BJ (cell line): ENCODE measurements at regions of chr13 and their contacts with region 1.

Region 1: DNA sequence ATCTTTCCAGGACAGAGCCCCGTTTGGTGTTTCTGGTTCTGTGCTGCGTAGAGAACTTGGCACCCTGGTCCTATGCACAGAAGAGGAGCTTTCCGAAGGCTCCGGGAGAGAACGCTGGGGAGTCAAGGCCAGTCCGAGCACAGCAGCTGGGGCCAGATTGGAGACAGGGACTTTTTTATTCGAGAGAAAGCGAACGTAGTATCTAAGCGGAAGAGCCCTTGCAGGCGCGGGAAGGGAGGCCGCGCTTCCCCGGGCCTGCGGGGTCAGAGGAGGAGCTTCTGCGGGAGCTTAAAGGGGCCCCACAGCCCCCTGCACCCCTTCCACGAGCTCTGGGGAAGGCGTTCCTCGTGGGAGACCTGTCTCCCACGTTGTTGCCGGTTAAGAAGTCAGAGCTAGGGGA is 48.6 kb upstream of the ARHGEF7 start:
- DNase-seq: no peak
- H3K4me3 ChIP-seq: no peak overlapping the region
- H3K27me3 ChIP-seq: peaks cover 5% of the 10 kb centered on the region
- CTCF ChIP-seq: no peak

Region 2: DNA sequence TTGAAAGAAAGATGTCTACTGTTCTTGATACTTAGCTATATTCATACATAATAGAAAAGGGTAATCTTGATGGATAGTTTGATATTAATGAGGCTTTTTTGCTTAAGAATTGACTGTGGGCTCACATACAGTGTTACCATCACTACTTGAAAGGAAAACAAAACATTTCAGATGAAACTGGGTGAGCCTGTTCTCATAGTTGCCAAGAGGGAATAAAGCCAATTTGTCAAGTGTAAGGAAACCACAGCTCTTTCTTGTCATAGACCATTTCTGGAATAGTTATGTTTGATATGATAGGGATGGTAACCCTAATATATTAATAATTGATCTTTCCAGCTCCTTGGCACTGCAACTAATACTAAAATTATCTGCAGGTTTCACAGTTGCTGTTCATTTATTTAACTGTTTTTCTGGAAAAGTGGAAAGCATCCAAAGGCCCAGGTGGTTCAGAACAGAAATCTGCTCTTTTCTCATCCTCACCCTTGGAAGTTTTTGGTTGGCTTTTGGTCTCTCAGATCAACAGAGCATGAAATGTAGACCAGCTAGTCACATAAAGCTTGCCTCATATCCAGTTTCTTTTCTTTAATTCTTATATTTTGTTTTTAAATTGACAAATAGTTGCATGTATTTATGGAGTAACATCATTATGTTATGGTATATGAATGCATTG is 91.7 kb after region 1 on chr13:
- CTCF ChIA-PET with region 1: interaction called, 11 read pairs
- POLR2A ChIA-PET with region 1: no interaction called
- DNase-seq: no peak
- H3K4me3 ChIP-seq: no peak overlapping the region
- H3K27me3 ChIP-seq: no peaks in the 10 kb centered on the region
- CTCF ChIP-seq: no peak

Region 3: GRCh38 chr13:111216166-111216960 is 149.8 kb after region 1 on chr13:
- CTCF ChIA-PET with region 1: interaction called, 33 read pairs
- POLR2A ChIA-PET with region 1: no interaction called
- DNase-seq: no peak
- H3K4me3 ChIP-seq: no peak overlapping the region
- H3K27me3 ChIP-seq: no peaks in the 10 kb centered on the region
- CTCF ChIP-seq: peak; percentile 51

Region 4: GRCh38 chr13:111286162-111286561 is 219.6 kb after region 1 on chr13:
- CTCF ChIA-PET with region 1: interaction called, 13 read pairs
- POLR2A ChIA-PET with region 1: no interaction called
- DNase-seq: no peak
- H3K4me3 ChIP-seq: no peak overlapping the region
- H3K27me3 ChIP-seq: no peaks in the 10 kb centered on the region
- CTCF ChIP-seq: no peak

Region 5: DNA sequence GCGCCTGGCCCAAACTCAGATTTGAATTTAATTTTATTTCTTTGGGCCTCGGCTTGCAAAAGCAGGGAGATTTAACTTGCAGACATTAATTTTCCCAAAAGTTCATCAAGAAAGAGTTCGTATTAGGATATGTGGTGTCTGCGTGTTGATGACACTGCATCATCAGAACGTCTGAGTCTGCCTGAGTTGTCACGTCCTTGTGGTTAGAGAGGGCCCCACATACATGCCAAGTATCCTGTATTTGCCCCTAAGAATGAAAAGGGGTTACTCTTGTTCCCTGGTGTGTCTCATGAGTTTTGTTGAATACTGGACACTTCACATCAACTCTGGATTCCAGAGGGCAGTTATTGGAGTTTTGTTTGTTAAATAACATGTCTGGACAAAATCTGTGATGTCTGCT is 248.3 kb after region 1 on chr13:
- CTCF ChIA-PET with region 1: no interaction called
- POLR2A ChIA-PET with region 1: no interaction called
- DNase-seq: peak; percentile 35
- H3K4me3 ChIP-seq: no peak overlapping the region
- H3K27me3 ChIP-seq: no peaks in the 10 kb centered on the region
- CTCF ChIP-seq: no peak

Region 6: GRCh38 chr13:111460548-111461444 is 394.3 kb after region 1 on chr13:
- CTCF ChIA-PET with region 1: interaction called, 18 read pairs
- POLR2A ChIA-PET with region 1: no interaction called
- DNase-seq: no peak
- H3K4me3 ChIP-seq: no peak overlapping the region
- H3K27me3 ChIP-seq: no peaks in the 10 kb centered on the region
- CTCF ChIP-seq: peak; percentile 51

Region 7: DNA sequence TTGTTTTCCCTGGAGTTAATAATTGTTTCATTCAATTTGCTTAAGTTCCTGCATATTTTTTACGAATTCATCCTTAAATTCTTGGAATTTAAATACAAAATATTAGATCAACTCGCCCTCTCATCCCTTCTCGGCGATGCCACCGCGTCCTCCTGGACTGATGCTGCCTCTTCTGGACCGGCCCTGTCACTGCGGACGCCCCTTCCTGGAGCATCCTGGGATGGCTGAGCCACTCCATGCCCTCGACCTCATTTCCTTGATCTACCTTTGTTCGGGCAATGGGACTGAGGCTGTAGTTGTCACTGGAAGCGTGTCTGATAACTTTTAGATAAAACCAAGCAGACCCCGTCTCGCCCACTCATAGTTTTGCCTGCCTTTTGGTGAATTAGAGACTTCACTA is 537.5 kb after region 1 on chr13:
- CTCF ChIA-PET with region 1: no interaction called
- POLR2A ChIA-PET with region 1: no interaction called
- DNase-seq: no peak
- H3K4me3 ChIP-seq: no peak overlapping the region
- H3K27me3 ChIP-seq: no peaks in the 10 kb centered on the region
- CTCF ChIP-seq: no peak